Dendritic cell treated with granulocyte-macrophage colony-stimulating factor and Interleukin-4, amounts not matched to agents 40 ng/mL and 50 ng/mL, for 4 days (primary cell): ENCODE measurements at regions of chr2 and their contacts with region 1.

Region 1: GRCh38 chr2:168118733-168119514 is 128.5 kb downstream of the STK39 start:
- H3K4me3 Mint-ChIP-seq: no peak overlapping the region
- H3K27ac Mint-ChIP-seq: no peak overlapping the region
- H3K4me1 Mint-ChIP-seq: no peaks in the 10 kb centered on the region
- H3K27me3 Mint-ChIP-seq: no peaks in the 10 kb centered on the region

Region 2: GRCh38 chr2:166539340-166540162 is 1579.4 kb before region 1 on chr2:
- intact Hi-C with region 1: loop called (anchors 2 kb)
- H3K4me3 Mint-ChIP-seq: no peak overlapping the region
- H3K27ac Mint-ChIP-seq: no peak overlapping the region
- H3K4me1 Mint-ChIP-seq: peaks cover 4% of the 10 kb centered on the region
- H3K27me3 Mint-ChIP-seq: no peaks in the 10 kb centered on the region

Region 3: GRCh38 chr2:167294776-167295140 is 824.2 kb before region 1 on chr2:
- intact Hi-C with region 1: loop called (anchors 5 kb)
- H3K4me3 Mint-ChIP-seq: peak overlapping the region; percentile 50
- H3K27ac Mint-ChIP-seq: no peak overlapping the region
- H3K4me1 Mint-ChIP-seq: peaks cover 19% of the 10 kb centered on the region
- H3K27me3 Mint-ChIP-seq: peaks cover 48% of the 10 kb centered on the region

Region 4: DNA sequence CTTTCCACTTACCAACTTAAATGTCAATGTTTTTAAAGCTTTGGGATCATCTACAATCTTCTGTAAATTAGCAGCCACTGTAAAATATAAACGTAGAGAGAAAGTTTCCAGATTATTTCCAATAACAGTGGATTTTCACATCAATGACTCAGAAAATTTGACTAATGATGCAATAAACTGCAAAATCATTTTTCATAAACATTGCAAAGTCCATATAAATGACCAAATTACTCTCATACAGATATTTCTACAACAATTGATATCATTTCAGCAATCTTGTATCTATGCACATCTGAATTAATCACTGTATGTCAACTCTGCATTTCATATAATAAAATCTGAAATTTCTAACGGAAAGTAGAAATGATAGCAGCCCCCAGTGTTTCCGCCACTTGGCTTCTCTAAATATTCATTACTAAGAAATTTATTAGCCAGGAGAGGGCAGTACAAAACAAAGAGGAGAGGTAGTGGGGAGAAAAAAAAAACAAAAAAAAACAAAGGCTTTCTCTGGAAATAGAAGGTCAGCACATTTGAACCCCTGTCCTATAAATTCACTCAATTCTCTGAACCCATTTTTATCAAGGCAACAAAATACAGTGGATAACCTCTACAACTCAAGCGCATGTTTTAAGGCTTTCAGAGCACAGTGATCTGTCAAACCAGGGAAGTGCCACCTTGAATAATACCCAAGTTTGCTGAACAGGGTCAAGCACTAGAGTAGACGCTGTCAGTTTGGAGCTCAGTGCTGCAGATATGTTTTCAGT is 154.1 kb before region 1 on chr2:
- intact Hi-C with region 1: loop called (anchors 1 kb)
- H3K4me3 Mint-ChIP-seq: no peak overlapping the region
- H3K27ac Mint-ChIP-seq: no peak overlapping the region
- H3K4me1 Mint-ChIP-seq: no peaks in the 10 kb centered on the region
- H3K27me3 Mint-ChIP-seq: no peaks in the 10 kb centered on the region

Region 5: GRCh38 chr2:168075446-168075845 is 43.5 kb before region 1 on chr2:
- intact Hi-C with region 1: no loop called
- H3K4me3 Mint-ChIP-seq: no peak overlapping the region
- H3K27ac Mint-ChIP-seq: no peak overlapping the region
- H3K4me1 Mint-ChIP-seq: peaks cover 4% of the 10 kb centered on the region
- H3K27me3 Mint-ChIP-seq: no peaks in the 10 kb centered on the region

Region 6: DNA sequence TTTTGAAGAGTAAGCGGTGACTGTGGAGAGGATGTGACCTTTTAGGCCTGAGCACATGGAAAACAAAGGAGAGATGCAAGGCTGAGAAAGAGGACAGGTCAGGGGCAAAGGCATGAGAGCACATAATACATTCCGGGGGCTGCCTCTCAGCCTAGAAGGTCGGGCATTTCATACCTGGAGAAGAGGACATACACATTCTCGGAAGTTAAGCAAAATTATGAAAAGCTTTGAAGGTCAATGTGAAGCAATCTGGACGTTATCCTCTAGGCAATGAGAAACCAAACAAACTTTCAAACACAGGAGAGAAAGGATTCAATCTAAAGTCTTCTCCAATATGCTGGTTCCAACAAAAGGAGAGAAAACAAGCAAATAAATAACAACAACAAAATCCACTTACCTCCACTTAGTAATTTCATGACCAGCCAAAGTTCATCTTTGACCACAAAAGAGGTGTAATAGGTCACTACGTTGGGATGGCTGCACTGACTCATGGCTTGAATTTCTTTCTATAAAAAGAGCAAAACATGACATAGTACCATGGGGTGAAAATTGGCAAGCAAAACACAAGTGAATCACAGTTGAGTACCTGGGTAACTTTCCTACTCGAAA is 48.1 kb after region 1 on chr2:
- intact Hi-C with region 1: no loop called
- H3K4me3 Mint-ChIP-seq: no peak overlapping the region
- H3K27ac Mint-ChIP-seq: peak overlapping the region; percentile 35
- H3K4me1 Mint-ChIP-seq: peaks cover 55% of the 10 kb centered on the region
- H3K27me3 Mint-ChIP-seq: no peaks in the 10 kb centered on the region